B cell (primary cell): ENCODE measurements at regions of chr4 and their contacts with region 1.

Region 1: DNA sequence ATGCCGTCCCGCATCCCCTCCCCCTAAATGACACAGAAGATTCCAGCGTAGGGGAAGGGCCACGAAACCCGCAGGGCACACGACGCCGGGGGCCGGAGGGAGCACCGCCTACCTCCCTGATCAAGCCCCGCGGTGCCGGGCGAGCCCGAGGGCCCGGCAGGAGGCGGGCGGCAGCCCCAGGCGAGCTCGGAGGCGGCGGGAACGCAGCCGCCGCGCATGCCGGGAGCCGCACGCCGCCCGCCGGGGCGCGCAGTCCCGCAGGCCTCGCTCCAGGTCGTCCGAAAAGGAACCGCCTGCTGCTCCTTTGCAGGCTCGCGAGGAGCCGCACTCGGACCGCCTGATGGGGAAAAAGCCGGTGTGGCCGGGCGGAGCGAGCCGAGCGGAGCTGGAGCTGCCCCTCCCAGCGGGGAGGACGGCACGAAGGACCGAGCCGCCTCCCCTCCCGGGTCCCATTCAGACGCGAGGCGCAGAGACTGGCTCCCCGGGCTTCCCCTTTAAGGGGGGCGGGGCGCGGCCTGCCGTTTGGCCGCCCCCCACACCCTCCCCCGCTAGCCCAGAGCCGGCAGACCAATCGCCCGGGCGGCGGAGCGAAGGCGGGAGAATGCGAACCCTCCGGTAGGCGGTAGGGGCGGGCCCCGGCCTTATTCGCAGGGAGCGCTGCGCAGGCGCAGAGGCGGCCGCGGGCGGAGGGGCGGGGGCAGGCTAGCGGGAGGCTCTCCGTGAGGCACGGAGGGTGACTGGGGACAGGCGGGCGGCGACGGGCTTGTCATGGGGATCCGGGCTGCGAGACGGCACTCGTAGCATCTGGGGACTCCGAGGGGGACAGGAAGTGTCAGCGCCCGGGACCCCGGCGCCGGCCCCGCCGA is 561 bp upstream of the ING2 start:
- DNase-seq: peak; percentile 99
- ATAC-seq: peak; percentile 78
- H3K4me3 ChIP-seq: peak overlapping the region; percentile 72 to 99 (median 85)
- H3K4me3 Mint-ChIP-seq: peak overlapping the region; percentile 98
- H3K27ac ChIP-seq: peak overlapping the region; percentile 74 to 97
- H3K27ac Mint-ChIP-seq: peak overlapping the region; percentile 100
- H3K4me1 ChIP-seq: peaks cover 7 to 10% of the 10 kb centered on the region in 2 donors
- H3K4me1 Mint-ChIP-seq: peaks cover 14% of the 10 kb centered on the region
- H3K27me3 ChIP-seq: no peaks in the 10 kb centered on the region
- H3K27me3 Mint-ChIP-seq: no peaks in the 10 kb centered on the region
- CTCF ChIP-seq: no peak

Region 2: DNA sequence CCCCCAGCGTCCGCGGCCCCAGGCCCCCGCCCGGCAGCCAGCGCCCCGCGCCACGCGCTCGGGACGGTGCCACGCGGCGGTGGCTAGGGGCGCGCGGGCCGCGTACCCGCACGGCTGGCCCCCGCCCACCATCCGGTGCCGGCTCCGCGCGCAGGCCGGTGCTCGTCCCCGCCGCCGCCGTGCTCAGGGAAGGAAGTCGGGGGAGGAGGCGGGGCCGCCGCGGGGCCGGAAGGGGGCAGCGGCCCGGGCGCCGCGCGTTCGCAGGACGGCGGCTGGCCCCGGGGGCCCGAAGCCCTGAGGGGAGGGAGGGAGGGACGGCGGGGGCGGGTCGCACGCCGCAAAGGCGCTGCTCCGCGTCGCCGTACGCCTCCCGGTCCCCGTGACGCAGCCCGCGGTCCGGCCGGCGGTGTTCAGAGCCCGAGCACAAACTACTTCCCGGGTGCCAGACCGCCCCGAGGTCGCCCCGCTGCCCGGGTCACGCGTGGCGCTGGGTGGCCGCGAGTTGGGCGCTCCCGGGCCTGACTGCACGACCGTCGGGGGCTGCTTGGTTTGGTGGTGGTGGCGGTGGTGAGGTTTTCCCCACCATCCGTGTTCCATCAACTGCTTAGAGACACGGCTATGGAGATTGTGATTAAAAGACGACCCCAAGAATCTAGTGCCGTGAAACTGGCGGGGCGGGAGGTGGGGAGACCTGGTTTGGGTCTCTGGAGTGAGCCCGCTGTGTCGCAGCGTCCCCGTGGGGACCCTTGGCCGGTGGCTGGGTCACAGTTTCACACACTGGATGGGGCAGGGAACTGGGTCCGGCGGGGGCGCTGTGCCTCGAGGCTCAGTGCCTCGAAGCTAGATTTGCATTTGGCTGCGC is 586.9 kb before region 1 on chr4 and contains the start of gene DCTD:
- CTCF ChIA-PET with region 1: interaction called, 5 read pairs
- POLR2A ChIA-PET with region 1: interaction called, 5 read pairs
- intact Hi-C with region 1: loop called (anchors 1 kb)
- DNase-seq: peak; percentile 92
- ATAC-seq: peak; percentile 80
- H3K4me3 ChIP-seq: peak within 1 kb of the TSS; percentile 33 to 96 (median 93)
- H3K4me3 Mint-ChIP-seq: peak within 1 kb of the TSS; percentile 93
- H3K27ac ChIP-seq: peak within 1 kb of the TSS; percentile 99
- H3K27ac Mint-ChIP-seq: peak within 1 kb of the TSS; percentile 95
- H3K4me1 ChIP-seq: peaks cover 24% of the 10 kb centered on the region in 2 donors
- H3K4me1 Mint-ChIP-seq: peaks cover 33% of the 10 kb centered on the region
- H3K27me3 ChIP-seq: peaks cover 0 to 5% (median 1%) of the 10 kb centered on the region in 4 experiments
- H3K27me3 Mint-ChIP-seq: peaks cover 8% of the 10 kb centered on the region
- CTCF ChIP-seq: peak; percentile 64
- total RNA-seq, gene DCTD: 66.0 and 75.8 TPM in 2 replicates

Region 3: GRCh38 chr4:183444214-183445066 is 59.9 kb before region 1 on chr4 and contains the start of gene CDKN2AIP:
- CTCF ChIA-PET with region 1: interaction called, 10 read pairs
- POLR2A ChIA-PET with region 1: interaction called, 15 read pairs
- intact Hi-C with region 1: loop called (anchors 1 kb)
- DNase-seq: peak; percentile 98
- ATAC-seq: peak; percentile 85
- H3K4me3 ChIP-seq: peak within 1 kb of the TSS; percentile 79 to 93 (median 82)
- H3K4me3 Mint-ChIP-seq: peak within 1 kb of the TSS; percentile 98
- H3K27ac ChIP-seq: peak within 1 kb of the TSS; percentile 78 to 95
- H3K27ac Mint-ChIP-seq: peak within 1 kb of the TSS; percentile 99
- H3K4me1 ChIP-seq: peaks cover 14 to 22% of the 10 kb centered on the region in 2 donors
- H3K4me1 Mint-ChIP-seq: peaks cover 33% of the 10 kb centered on the region
- H3K27me3 ChIP-seq: no peaks in the 10 kb centered on the region
- H3K27me3 Mint-ChIP-seq: no peaks in the 10 kb centered on the region
- CTCF ChIP-seq: peak; percentile 5
- total RNA-seq, gene CDKN2AIP: 36.0 and 42.6 TPM in 2 replicates

Region 4: DNA sequence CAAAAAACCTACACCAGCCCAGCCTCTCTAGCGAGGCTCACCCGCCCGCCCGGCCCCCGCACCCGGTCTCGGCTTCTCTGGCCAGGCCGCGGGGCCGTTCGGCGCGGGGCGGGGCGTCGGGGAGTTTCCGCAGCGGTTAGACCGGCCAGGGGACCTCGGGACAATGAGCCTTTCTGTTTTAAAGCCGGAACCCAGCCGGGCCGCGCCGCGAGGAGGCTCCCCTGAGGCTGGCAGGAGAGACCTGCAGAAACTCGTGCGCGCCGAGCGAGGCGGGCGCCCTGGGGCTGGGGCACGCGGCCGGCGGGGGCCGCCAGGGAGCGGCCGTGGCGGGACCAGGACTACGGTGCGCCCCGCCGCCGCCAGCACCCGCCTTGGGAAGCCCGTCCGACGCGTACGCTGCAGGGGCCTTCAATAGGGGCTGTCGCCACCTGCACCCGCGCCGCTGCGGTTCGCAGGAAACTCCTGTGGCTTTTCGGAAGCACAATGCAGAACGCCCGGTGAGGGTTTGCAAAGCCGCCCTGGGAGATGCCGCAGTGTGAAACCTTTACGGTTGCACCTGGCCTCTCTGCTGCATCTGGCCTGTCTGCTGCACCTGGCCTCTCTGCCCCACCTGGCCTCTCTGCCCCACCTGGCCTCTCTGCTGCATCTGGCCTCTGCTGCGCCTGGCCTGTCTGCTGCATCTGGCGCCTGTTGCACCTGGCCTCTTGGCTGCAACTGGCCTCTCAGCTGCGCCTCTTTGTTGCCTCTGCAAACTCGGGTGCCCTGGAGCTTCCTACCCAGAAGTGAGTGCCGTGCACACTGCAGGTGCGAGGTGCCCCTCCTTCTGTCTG is 218.6 kb after region 1 on chr4:
- CTCF ChIA-PET with region 1: no interaction called
- POLR2A ChIA-PET with region 1: no interaction called
- intact Hi-C with region 1: loop called (anchors 2 kb)
- DNase-seq: peak; percentile 82
- ATAC-seq: peak; percentile 61
- H3K4me3 ChIP-seq: peak overlapping the region in 4 of 5 experiments; percentile 32 to 64 (median 52)
- H3K4me3 Mint-ChIP-seq: peak overlapping the region; percentile 84
- H3K27ac ChIP-seq: no peak overlapping the region
- H3K27ac Mint-ChIP-seq: peak overlapping the region; percentile 56
- H3K4me1 ChIP-seq: peaks cover 8 to 20% of the 10 kb centered on the region in 2 donors
- H3K4me1 Mint-ChIP-seq: peaks cover 12% of the 10 kb centered on the region
- H3K27me3 ChIP-seq: peaks cover 0 to 18% (median 5%) of the 10 kb centered on the region in 4 experiments
- H3K27me3 Mint-ChIP-seq: peaks cover 21% of the 10 kb centered on the region
- CTCF ChIP-seq: no peak

Region 5: DNA sequence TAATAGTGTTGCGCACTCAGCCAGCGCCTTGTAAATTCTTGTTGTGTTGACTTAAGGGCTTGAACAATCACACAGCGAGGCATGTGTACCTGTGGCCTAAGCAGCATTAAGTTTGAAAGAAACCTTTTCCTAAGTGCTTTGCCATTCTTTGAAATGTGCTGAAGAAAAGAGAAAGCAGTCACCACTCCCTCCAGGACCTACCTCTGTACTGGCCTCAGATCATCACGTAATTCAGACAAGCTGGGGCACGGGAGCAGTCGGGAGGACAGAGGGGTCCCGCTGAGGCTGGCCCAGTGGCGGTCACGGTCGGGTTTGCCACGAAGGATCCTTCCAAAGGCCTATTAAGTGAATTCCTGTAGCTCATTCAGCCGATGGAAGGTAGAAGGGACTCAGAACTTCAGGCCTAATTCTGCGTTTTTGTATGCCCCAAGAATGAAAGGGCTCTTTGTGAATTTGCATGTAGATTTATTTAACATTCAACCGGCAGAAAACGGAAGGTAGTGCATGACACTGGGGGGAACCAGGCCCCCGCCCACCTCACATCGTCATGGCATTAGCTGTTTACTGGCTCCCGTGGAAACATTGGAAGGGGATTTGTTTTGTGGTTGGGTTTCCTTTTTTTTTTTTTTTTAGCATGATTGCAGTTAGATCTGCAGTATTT is 261.1 kb after region 1 on chr4:
- CTCF ChIA-PET with region 1: no interaction called
- POLR2A ChIA-PET with region 1: no interaction called
- intact Hi-C with region 1: no loop called
- DNase-seq: no peak
- ATAC-seq: no peak
- H3K4me3 ChIP-seq: no peak overlapping the region
- H3K4me3 Mint-ChIP-seq: no peak overlapping the region
- H3K27ac ChIP-seq: no peak overlapping the region
- H3K27ac Mint-ChIP-seq: no peak overlapping the region
- H3K4me1 ChIP-seq: no peaks in the 10 kb centered on the region
- H3K4me1 Mint-ChIP-seq: peaks cover 3% of the 10 kb centered on the region
- H3K27me3 ChIP-seq: peaks cover 0 to 10% (median 0%) of the 10 kb centered on the region in 4 experiments
- H3K27me3 Mint-ChIP-seq: peaks cover 10% of the 10 kb centered on the region
- CTCF ChIP-seq: no peak

Region 6: DNA sequence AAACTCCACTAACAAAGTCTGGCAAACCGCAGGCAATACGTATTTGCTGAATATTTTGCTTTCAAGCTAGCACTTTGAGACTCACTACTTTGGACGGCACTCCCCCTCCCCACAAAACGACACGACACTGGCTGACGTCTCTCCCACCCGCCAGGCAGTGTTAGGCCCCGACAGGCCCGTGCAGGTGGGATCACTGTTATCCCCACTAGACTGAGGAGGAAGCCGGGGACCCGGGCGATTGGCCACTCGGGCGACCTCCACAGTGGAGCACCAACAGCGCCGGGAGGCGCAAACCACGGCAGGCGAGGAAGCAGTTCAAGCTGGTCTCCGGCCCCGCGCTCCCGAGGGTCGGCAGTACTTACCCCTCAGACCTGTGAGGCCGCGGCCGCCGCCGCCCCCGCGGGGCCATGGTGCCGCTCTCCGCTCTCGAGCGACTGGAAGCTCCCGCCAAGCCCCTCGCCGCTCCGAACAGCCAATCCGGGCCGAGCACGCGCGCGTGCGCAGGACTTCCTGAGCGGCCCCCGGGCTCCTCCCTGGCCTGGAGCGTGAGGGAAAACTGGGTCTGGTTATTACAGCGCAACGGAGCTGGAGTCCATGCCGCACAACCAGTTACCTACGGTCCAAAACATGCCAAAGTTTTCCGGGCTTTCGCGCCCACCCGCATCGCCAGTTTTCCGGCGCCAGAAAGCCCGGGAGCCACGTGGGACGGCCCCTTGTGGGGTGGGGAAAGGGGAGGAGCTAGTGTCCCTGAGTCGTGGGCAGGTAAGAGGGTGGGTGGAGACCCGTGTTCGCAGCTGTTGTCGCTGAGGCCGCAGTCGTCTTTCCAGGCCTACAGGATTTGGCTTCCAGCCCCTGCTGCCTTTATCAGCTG is 1229.6 kb after region 1 on chr4 and contains the start of gene CENPU:
- CTCF ChIA-PET with region 1: no interaction called
- POLR2A ChIA-PET with region 1: interaction called, 3 read pairs
- intact Hi-C with region 1: loop called (anchors 5 kb)
- DNase-seq: peak; percentile 96
- ATAC-seq: peak; percentile 95
- H3K4me3 ChIP-seq: peak within 1 kb of the TSS; percentile 65 to 76 (median 72)
- H3K4me3 Mint-ChIP-seq: peak within 1 kb of the TSS; percentile 93
- H3K27ac ChIP-seq: peak within 1 kb of the TSS; percentile 1 to 52
- H3K27ac Mint-ChIP-seq: peak within 1 kb of the TSS; percentile 93
- H3K4me1 ChIP-seq: peaks cover 7 to 12% of the 10 kb centered on the region in 2 donors
- H3K4me1 Mint-ChIP-seq: peaks cover 16% of the 10 kb centered on the region
- H3K27me3 ChIP-seq: no peaks in the 10 kb centered on the region
- H3K27me3 Mint-ChIP-seq: no peaks in the 10 kb centered on the region
- CTCF ChIP-seq: no peak
- total RNA-seq, gene CENPU: 1.6 and 3.2 TPM in 2 replicates

Region 7: GRCh38 chr4:185395956-185396723 is 1891.8 kb after region 1 on chr4:
- CTCF ChIA-PET with region 1: no interaction called
- POLR2A ChIA-PET with region 1: no interaction called
- intact Hi-C with region 1: loop called (anchors 5 kb)
- DNase-seq: peak; percentile 97
- ATAC-seq: peak; percentile 87
- H3K4me3 ChIP-seq: peak overlapping the region; percentile 79 to 98 (median 89)
- H3K4me3 Mint-ChIP-seq: peak overlapping the region; percentile 92
- H3K27ac ChIP-seq: peak overlapping the region; percentile 97 to 99
- H3K27ac Mint-ChIP-seq: peak overlapping the region; percentile 94
- H3K4me1 ChIP-seq: peaks cover 26% of the 10 kb centered on the region in 2 donors
- H3K4me1 Mint-ChIP-seq: peaks cover 54% of the 10 kb centered on the region
- H3K27me3 ChIP-seq: no peaks in the 10 kb centered on the region
- H3K27me3 Mint-ChIP-seq: no peaks in the 10 kb centered on the region
- CTCF ChIP-seq: no peak